CD8-positive, alpha-beta T cell (primary cell): ENCODE measurements at regions of chr6 and their contacts with region 1.

Region 1: DNA sequence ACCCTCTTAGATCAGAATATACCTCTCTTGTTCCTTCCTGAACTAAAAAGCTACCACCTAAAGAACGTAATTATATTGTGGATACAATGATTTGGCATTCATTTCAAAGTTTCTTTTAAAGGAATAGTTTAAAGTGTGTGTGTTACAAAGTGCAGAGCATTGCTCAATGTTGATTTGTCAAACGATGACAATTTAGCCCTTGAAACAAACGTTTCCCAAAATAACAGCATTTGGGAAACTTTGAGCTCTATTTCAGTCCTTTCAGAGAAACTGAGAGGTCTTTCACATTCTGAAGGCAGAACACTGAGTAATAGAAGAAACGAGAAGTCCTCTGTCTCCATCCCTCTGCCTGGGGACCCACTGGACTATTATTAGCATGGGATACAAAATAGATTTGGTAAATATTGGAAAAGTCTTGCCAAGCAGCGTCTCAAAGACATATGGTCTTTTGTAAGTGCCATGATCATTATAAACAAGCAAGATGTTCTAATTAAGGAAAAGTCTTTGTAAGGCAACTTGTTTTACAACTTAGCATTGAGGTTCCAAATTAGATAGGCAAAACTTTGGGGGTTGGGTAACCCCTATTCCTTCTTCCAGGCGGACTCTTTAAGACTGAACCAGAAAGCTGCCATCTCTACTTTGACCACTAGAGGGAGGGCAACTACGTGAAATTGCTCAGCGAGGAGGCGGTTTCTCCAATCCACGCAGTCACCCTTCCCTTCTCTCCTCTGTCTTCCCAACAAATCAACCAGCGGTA is 208.8 kb downstream of the RNF144B start:
- DNase-seq: peak in 7 of 9 experiments; percentile 10 to 56 (median 45)
- ATAC-seq: no peak
- H3K4me3 ChIP-seq: no peak overlapping the region
- H3K4me3 Mint-ChIP-seq: no peak overlapping the region
- H3K27ac ChIP-seq: no peak overlapping the region
- H3K27ac Mint-ChIP-seq: no peak overlapping the region
- H3K4me1 ChIP-seq: no peaks in the 10 kb centered on the region
- H3K4me1 Mint-ChIP-seq: peaks cover 4% of the 10 kb centered on the region
- H3K27me3 ChIP-seq: no peaks in the 10 kb centered on the region
- H3K27me3 Mint-ChIP-seq: peaks cover 16% of the 10 kb centered on the region
- CTCF ChIP-seq: peak; percentile 98

Region 2: GRCh38 chr6:20056350-20056992 is 1460.5 kb after region 1 on chr6:
- CTCF ChIA-PET with region 1: interaction called, 6 read pairs
- POLR2A ChIA-PET with region 1: no interaction called
- intact Hi-C with region 1: loop called in 1 of 2 experiments (anchors 1 kb)
- DNase-seq: peak in 2 of 9 experiments; percentile 24 to 39
- ATAC-seq: no peak
- H3K4me3 ChIP-seq: no peak overlapping the region
- H3K4me3 Mint-ChIP-seq: no peak overlapping the region
- H3K27ac ChIP-seq: no peak overlapping the region
- H3K27ac Mint-ChIP-seq: no peak overlapping the region
- H3K4me1 ChIP-seq: no peaks in the 10 kb centered on the region
- H3K4me1 Mint-ChIP-seq: no peaks in the 10 kb centered on the region
- H3K27me3 ChIP-seq: no peaks in the 10 kb centered on the region
- H3K27me3 Mint-ChIP-seq: no peaks in the 10 kb centered on the region
- CTCF ChIP-seq: no peak